Activated CD4-positive, alpha-beta memory T cell treated with anti-CD3 and anti-CD28 coated beads, Interleukin-2, amount 10 ng/mL, durations not matched to agents 7 days and 5 days (primary cell): ENCODE measurements at regions of chr9 and their contacts with region 1.

Region 1: GRCh38 chr9:133060417-133060841 is 1.4 kb upstream of the CEL start:
- DNase-seq: no peak
- H3K4me3 Mint-ChIP-seq: no peak overlapping the region
- H3K27ac Mint-ChIP-seq: peak overlapping the region; percentile 81
- H3K4me1 Mint-ChIP-seq: peaks cover 50% of the 10 kb centered on the region
- H3K27me3 Mint-ChIP-seq: no peaks in the 10 kb centered on the region

Region 2: GRCh38 chr9:132994410-132995120 is 65.9 kb before region 1 on chr9:
- CTCF ChIA-PET with region 1: no interaction called
- POLR2A ChIA-PET with region 1: no interaction called
- DNase-seq: no peak
- H3K4me3 Mint-ChIP-seq: no peak overlapping the region
- H3K27ac Mint-ChIP-seq: no peak overlapping the region
- H3K4me1 Mint-ChIP-seq: peaks cover 6% of the 10 kb centered on the region
- H3K27me3 Mint-ChIP-seq: peaks cover 20% of the 10 kb centered on the region

Region 3: DNA sequence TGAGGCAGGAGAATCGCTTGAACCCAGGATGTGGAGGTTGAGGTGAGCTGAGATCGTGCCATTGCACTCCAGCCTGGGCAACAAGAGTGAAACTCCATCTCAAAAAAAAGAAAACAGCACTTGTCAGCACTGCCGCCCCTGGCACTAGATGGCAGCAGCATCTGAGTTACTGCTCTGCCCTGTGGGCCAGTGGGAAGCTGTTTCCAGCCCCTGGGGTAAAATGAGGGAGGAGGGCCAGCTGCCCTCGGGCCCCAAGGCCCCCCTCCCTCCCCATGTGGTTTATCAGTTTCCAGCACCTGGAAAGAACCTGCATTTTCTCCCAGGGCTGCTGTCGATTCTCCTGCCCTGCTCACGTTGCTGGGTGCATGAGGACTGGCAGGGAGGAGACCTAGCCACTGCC is 11.9 kb before region 1 on chr9:
- CTCF ChIA-PET with region 1: interaction called, 12 read pairs
- POLR2A ChIA-PET with region 1: no interaction called
- DNase-seq: peak; percentile 64
- H3K4me3 Mint-ChIP-seq: no peak overlapping the region
- H3K27ac Mint-ChIP-seq: no peak overlapping the region
- H3K4me1 Mint-ChIP-seq: peaks cover 3% of the 10 kb centered on the region
- H3K27me3 Mint-ChIP-seq: no peaks in the 10 kb centered on the region